B cell (primary cell): ENCODE measurements at regions of chr17 and their contacts with region 1.

Region 1: DNA sequence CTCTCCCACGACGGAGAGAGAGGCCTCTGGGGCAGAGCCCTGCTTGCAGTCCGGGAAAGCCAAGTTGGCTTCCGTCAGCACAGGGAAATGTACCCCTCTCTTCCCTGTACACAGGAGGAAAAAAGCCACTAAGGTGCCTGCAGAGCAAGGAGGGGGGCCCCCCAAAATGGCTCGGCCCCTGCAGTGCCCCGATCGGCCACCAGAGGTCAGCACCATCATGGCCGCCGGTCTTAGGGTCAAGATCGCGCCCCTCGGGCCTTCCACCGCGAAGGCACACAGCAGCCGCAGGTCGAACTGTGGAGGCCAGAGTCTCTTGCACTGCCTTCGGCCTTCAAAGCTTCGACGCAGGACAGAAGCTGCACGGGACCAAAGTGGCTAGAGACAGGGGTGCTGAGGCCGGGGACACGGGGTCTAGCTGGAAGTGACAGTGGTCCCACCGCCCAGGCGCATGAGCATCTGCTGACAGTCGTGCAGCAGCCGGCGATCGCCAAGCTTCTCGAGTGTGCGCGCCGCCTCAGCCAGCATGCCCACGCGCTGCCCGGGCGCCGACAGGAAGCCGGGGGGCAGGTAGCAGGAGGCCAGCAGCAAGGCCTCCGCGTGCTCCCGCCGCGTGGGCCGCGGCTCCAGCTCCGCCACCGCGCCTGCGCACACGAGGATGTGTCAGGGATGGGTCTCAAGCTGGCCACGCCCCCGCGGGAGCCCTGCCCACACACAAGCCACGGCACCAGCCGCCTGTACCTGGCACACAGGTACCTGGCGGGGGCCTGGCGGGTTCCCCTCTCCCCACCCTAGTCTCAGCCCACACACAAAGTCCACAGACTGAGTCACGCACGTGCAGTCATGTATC is 24.4 kb downstream of the SREBF1 start:
- DNase-seq: peak; percentile 82
- ATAC-seq: peak; percentile 86
- H3K4me3 ChIP-seq: no peak overlapping the region
- H3K4me3 Mint-ChIP-seq: no peak overlapping the region
- H3K27ac ChIP-seq: no peak overlapping the region
- H3K27ac Mint-ChIP-seq: no peak overlapping the region
- H3K4me1 ChIP-seq: peaks cover 0 to 9% of the 10 kb centered on the region in 2 donors
- H3K4me1 Mint-ChIP-seq: peaks cover 7% of the 10 kb centered on the region
- H3K27me3 ChIP-seq: no peaks in the 10 kb centered on the region
- H3K27me3 Mint-ChIP-seq: no peaks in the 10 kb centered on the region
- CTCF ChIP-seq: peak; percentile 100

Region 2: GRCh38 chr17:17681187-17681848 is 131.1 kb before region 1 on chr17 and contains the start of gene RAI1:
- CTCF ChIA-PET with region 1: interaction called, 50 read pairs
- POLR2A ChIA-PET with region 1: interaction called, 3 read pairs
- intact Hi-C with region 1: no loop called
- DNase-seq: peak; percentile 90
- ATAC-seq: peak; percentile 64
- H3K4me3 ChIP-seq: peak within 1 kb of the TSS in 4 of 5 experiments; percentile 66 to 86 (median 72)
- H3K4me3 Mint-ChIP-seq: peak within 1 kb of the TSS; percentile 91
- H3K27ac ChIP-seq: peak within 1 kb of the TSS; percentile 86 to 97
- H3K27ac Mint-ChIP-seq: peak within 1 kb of the TSS; percentile 88
- H3K4me1 ChIP-seq: peaks cover 7 to 19% of the 10 kb centered on the region in 2 donors
- H3K4me1 Mint-ChIP-seq: peaks cover 30% of the 10 kb centered on the region
- H3K27me3 ChIP-seq: peaks cover 0 to 3% (median 0%) of the 10 kb centered on the region in 4 experiments
- H3K27me3 Mint-ChIP-seq: peaks cover 5% of the 10 kb centered on the region
- CTCF ChIP-seq: peak; percentile 74
- total RNA-seq, gene RAI1: 33.6 and 34.0 TPM in 2 replicates

Region 3: DNA sequence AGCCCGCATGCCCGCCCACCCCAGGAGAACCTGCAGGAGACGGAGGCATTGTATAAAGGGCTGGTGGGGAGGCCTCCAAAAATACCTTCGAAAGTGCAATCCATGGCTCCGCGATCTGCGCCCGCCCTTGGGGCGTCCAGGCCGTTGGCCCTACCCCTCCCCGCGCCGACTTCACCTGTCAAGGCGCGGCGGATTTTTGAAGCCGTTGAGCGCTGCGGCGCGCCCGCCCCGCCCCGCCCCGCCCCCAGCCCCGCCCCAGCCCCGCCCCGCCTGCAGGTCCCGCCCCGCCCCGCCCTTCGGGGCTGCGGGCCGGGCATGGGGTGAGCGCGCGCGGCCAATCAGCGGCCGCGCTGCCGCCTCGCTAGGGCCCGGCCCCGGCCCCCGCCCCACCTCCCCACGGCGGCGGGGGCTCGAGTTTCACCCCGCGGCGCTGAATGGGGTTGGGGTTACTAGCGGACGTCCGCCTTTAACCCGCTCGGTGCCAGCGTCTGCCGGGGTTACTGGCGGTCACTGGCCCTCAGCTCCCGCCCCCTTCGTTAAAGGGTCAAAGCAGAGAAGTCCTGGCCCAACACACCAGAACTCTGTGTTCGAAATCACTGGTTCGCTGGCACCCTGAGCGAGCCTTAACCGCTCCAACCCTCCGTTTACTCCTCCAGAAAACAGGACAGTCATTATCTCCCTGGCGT is 11.1 kb after region 1 on chr17:
- CTCF ChIA-PET with region 1: interaction called, 19 read pairs
- POLR2A ChIA-PET with region 1: no interaction called
- intact Hi-C with region 1: no loop called
- DNase-seq: peak; percentile 86
- ATAC-seq: peak; percentile 93
- H3K4me3 ChIP-seq: peak overlapping the region; percentile 35 to 82 (median 56)
- H3K4me3 Mint-ChIP-seq: peak overlapping the region; percentile 86
- H3K27ac ChIP-seq: peak overlapping the region; percentile 16 to 56
- H3K27ac Mint-ChIP-seq: peak overlapping the region; percentile 67
- H3K4me1 ChIP-seq: peaks cover 28 to 41% of the 10 kb centered on the region in 2 donors
- H3K4me1 Mint-ChIP-seq: peaks cover 52% of the 10 kb centered on the region
- H3K27me3 ChIP-seq: no peaks in the 10 kb centered on the region
- H3K27me3 Mint-ChIP-seq: no peaks in the 10 kb centered on the region
- CTCF ChIP-seq: no peak

Region 4: GRCh38 chr17:17849845-17850373 is 37.5 kb after region 1 on chr17:
- CTCF ChIA-PET with region 1: interaction called, 19 read pairs
- POLR2A ChIA-PET with region 1: no interaction called
- intact Hi-C with region 1: no loop called
- DNase-seq: peak; percentile 72
- ATAC-seq: peak; percentile 88
- H3K4me3 ChIP-seq: no peak overlapping the region
- H3K4me3 Mint-ChIP-seq: no peak overlapping the region
- H3K27ac ChIP-seq: peak overlapping the region; percentile 30 to 37
- H3K27ac Mint-ChIP-seq: no peak overlapping the region
- H3K4me1 ChIP-seq: peaks cover 24 to 31% of the 10 kb centered on the region in 2 donors
- H3K4me1 Mint-ChIP-seq: peaks cover 33% of the 10 kb centered on the region
- H3K27me3 ChIP-seq: no peaks in the 10 kb centered on the region
- H3K27me3 Mint-ChIP-seq: no peaks in the 10 kb centered on the region
- CTCF ChIP-seq: peak; percentile 39

Region 5: DNA sequence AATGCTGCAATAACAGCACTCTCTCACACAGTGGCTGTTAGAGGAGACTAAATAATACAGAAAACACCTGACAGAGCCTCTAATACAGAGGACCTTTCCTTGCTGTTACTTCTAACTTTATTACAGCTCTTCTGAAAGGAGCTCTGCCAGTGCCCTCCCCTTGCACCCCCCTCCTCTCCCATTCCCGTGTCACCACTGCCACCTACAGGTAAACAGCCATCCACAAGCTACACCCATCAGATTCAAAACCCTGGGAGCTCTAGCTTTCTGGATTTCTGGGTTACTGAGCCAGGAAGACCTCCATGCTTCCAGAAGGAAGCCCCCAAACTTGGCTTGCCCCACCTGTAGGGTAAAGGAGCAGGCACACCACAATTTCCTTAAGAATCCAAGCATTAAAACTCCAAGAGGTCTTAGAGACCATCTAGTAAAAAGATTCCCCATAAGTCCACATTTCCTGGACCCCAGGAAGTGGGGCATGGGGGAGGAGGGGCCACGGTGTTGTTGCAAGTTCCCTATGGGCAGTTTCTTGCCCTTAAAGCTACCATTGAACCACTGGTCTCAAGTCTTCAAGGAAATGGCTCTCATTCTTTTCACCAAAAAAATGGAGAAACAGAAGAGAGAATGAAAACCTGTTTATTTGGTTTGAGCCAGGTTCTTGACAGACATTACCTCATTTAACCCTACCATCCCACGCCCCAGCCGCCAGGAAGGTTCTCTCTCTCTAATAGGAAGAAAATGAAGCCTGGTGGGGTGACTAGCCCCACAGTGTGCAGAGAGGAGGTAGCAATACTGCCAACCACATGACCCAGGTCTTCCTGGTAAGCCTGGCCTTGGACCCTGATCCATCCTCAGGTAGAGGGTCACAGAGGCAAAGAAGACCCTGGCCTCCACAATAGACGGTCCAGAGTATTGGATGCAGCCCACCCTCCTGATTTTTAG is 107.0 kb after region 1 on chr17:
- CTCF ChIA-PET with region 1: interaction called, 23 read pairs
- POLR2A ChIA-PET with region 1: no interaction called
- intact Hi-C with region 1: no loop called
- DNase-seq: peak; percentile 67
- ATAC-seq: peak; percentile 69
- H3K4me3 ChIP-seq: no peak overlapping the region
- H3K4me3 Mint-ChIP-seq: no peak overlapping the region
- H3K27ac ChIP-seq: no peak overlapping the region
- H3K27ac Mint-ChIP-seq: no peak overlapping the region
- H3K4me1 ChIP-seq: no peaks in the 10 kb centered on the region
- H3K4me1 Mint-ChIP-seq: no peaks in the 10 kb centered on the region
- H3K27me3 ChIP-seq: no peaks in the 10 kb centered on the region
- H3K27me3 Mint-ChIP-seq: no peaks in the 10 kb centered on the region
- CTCF ChIP-seq: peak; percentile 71